ENCODE measurements at regions of chr11 and their contacts with region 1.

Region 1: DNA sequence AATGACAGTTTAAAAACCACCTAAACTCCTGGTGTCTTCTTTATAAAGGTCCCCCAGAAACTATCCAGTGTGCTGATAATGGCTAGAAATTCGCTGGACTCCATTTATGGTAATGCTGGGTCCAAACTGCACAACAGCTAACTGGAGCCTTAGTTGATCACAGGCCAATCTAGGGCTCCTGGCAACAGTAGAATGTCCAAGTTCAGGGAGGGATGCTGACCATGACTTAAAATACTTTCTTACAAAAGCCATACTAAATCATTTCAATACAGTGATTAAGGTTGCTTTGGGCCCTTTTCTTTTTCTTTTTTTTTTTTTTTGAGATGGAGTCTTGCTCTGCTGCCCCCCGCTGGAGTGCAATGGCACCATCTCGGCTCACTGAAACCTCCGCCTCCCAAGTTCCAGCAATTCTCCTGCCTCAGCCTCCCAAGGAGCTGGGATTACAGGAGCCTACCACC is 14.5 kb upstream of the GAB2 start:
- DNase-seq: peak; percentile 37
- ATAC-seq: no peak; the same call in 1 of the 2 replicates
- H3K4me3 ChIP-seq: no peak overlapping the region
- H3K27ac ChIP-seq: no peak overlapping the region
- H3K4me1 ChIP-seq: no peaks in the 10 kb centered on the region
- H3K27me3 ChIP-seq: no peaks in the 10 kb centered on the region
- CTCF ChIP-seq: peak; percentile 67

Region 2: GRCh38 chr11:78350646-78351165 is 81.4 kb before region 1 on chr11:
- CTCF ChIA-PET with region 1: no interaction called
- POLR2A ChIA-PET with region 1: no interaction called
- intact Hi-C with region 1: no loop called
- DNase-seq: no peak
- ATAC-seq: no peak
- H3K4me3 ChIP-seq: no peak overlapping the region
- H3K27ac ChIP-seq: no peak overlapping the region
- H3K4me1 ChIP-seq: peaks cover 15% of the 10 kb centered on the region
- H3K27me3 ChIP-seq: no peaks in the 10 kb centered on the region
- CTCF ChIP-seq: no peak

Region 3: GRCh38 chr11:78453140-78453935 is 21.3 kb after region 1 on chr11:
- CTCF ChIA-PET with region 1: no interaction called
- POLR2A ChIA-PET with region 1: no interaction called
- intact Hi-C with region 1: no loop called
- DNase-seq: no peak
- ATAC-seq: no peak
- H3K4me3 ChIP-seq: no peak overlapping the region
- H3K27ac ChIP-seq: no peak overlapping the region
- H3K4me1 ChIP-seq: no peaks in the 10 kb centered on the region
- H3K27me3 ChIP-seq: no peaks in the 10 kb centered on the region
- CTCF ChIP-seq: no peak

Region 4: DNA sequence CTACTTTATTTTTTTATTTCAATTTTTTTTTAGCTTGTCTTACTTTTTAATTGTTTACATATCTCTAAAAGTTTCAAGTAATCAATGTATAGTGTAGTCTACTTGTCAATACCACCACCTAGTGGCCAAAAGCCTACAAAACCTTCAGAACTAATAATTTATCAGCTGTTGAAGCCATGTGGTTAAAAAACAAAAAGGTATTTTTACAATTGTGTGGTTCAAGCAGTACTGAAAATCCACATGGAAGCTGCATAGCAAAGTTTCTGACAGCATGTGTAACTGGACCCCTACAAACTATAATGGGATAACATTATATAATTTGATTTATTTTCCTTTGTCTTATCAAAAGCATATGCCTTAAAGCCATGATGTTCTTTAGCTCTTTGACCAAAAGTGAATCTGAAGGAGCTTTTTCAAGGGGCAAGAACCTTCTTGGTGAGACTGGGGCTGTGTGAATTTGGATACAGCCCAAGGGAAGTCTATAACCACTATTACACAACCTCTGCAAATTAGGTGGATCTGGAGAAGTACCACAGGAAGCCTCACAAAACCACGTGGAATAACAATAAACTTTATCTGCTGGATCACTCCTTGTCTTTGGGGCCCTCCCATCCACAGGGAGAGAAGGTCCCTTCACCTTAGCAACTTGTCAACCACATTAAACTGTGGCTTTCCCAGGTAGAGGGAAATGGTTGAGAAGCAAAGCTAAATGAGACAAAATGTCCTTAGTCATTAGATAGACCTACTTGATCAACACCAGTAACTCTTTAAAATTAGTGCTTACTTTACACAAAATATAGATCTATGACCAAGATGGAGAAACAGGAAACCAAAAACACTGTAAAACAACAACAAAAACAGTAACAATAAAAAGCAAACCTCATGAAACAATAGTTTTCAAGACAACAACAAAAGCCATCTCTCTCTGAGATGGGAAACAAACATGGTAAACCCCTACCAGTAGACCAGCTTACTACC is 132.7 kb after region 1 on chr11:
- CTCF ChIA-PET with region 1: no interaction called
- POLR2A ChIA-PET with region 1: no interaction called
- intact Hi-C with region 1: loop called (anchors 5 kb)
- DNase-seq: peak; percentile 91
- ATAC-seq: peak; percentile 15; the same call in 1 of the 2 replicates
- H3K4me3 ChIP-seq: no peak overlapping the region
- H3K27ac ChIP-seq: no peak overlapping the region
- H3K4me1 ChIP-seq: peaks cover 62% of the 10 kb centered on the region
- H3K27me3 ChIP-seq: no peaks in the 10 kb centered on the region
- CTCF ChIP-seq: peak; percentile 89

Region 5: GRCh38 chr11:78574386-78575381 is 142.6 kb after region 1 on chr11 and contains the start of gene NARS2:
- CTCF ChIA-PET with region 1: no interaction called
- POLR2A ChIA-PET with region 1: interaction called, 18 read pairs
- intact Hi-C with region 1: no loop called
- DNase-seq: peak; percentile 99
- ATAC-seq: peak; percentile 94
- H3K4me3 ChIP-seq: peak within 1 kb of the TSS; percentile 92
- H3K27ac ChIP-seq: peak within 1 kb of the TSS; percentile 21
- H3K4me1 ChIP-seq: peaks cover 21% of the 10 kb centered on the region
- H3K27me3 ChIP-seq: no peaks in the 10 kb centered on the region
- CTCF ChIP-seq: no peak
- total RNA-seq, gene NARS2: 33.5 and 35.5 TPM in 2 replicates

Measured in PC-3 (cell line).